GM12878 (cell line): ENCODE measurements at regions of chr5 and their contacts with region 1.

Region 1: GRCh38 chr5:149834246-149834855 is 104.2 kb downstream of the PPARGC1B start:
- DNase-seq: no peak
- ATAC-seq: peak; percentile 55
- H3K4me3 ChIP-seq: no peak overlapping the region
- H3K27ac ChIP-seq: no peak overlapping the region
- H3K4me1 ChIP-seq: peaks cover 8% of the 10 kb centered on the region
- H3K27me3 ChIP-seq: no peaks in the 10 kb centered on the region
- CTCF ChIP-seq: peak; percentile 72 to 78 (median 75)
- EP300 ChIP-seq: no peak
- POLR2A ChIP-seq: no peak
- RAD21 ChIP-seq: peak; percentile 68

Region 2: DNA sequence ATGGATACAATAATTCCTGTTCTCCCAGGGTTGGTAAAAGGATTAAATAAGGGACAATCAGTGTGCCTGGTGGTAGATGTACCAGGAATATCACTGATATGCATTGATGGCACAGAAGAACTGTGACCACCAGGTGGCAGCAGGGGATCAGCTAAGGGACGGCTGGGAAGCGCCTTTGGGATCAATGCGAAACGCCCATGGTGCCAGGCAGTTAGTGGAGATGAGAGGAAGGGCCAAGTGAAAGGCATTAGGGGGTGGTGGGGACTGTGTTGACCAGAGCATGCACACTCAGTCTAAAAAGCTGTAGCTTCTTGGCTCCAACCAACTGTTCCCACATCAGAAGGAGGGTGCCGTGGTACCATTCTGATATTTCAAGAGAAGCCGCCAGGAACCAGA is 197.5 kb before region 1 on chr5:
- CTCF ChIA-PET with region 1: interaction called, 165 read pairs
- POLR2A ChIA-PET with region 1: interaction called, 3 read pairs
- RAD21 ChIA-PET with region 1: interaction called, 148 read pairs
- SMC1A ChIA-PET with region 1: interaction called, 38 read pairs
- in situ Hi-C with region 1: loop called (anchors 5 kb)
- intact Hi-C with region 1: no loop called
- DNase-seq: no peak
- ATAC-seq: peak; percentile 85
- H3K4me3 ChIP-seq: no peak overlapping the region
- H3K27ac ChIP-seq: no peak overlapping the region
- H3K4me1 ChIP-seq: peaks cover 12% of the 10 kb centered on the region
- H3K27me3 ChIP-seq: no peaks in the 10 kb centered on the region
- CTCF ChIP-seq: peak; percentile 74 to 78 (median 77)
- EP300 ChIP-seq: no peak
- POLR2A ChIP-seq: no peak
- RAD21 ChIP-seq: peak; percentile 87

Region 3: DNA sequence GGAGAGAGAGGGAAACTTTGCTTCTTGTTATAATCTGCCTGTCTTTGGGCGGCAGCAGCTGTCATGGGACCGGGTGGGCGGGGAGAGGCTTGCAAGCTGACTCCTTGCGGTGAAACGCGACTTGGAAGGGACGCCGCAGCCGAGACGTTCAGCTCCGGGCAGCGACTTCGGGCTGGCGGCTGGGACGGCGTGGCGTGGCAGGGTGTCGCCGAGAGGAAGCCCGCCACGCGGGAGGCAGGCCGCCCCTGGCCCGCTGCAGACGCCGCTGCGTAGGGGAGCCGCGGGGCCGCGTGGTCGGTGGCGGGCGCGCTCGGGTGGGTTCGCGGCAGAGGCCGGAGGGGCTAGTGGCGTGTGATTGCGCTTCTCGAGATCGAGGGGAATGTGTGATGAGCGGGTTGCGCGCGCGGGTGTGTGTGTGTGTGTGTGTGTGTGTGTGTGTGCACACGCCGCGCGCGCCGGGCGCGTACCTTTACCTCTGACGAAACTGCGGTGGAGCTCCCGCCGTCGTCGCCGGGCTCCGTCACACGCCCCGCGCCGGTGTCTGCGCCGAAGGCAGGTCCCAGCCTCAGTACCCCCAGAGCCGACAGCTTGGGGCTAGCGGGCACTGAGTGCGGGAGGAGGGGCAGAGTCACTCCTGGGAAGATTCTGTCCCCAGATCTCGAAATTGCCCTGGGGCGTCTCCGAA is 102.6 kb before region 1 on chr5:
- CTCF ChIA-PET with region 1: interaction called, 35 read pairs
- POLR2A ChIA-PET with region 1: interaction called, 5 read pairs
- RAD21 ChIA-PET with region 1: interaction called, 12 read pairs
- SMC1A ChIA-PET with region 1: interaction called, 25 read pairs
- in situ Hi-C with region 1: no loop called
- intact Hi-C with region 1: loop called (anchors 2 kb)
- DNase-seq: peak; percentile 62
- ATAC-seq: peak; percentile 77
- H3K4me3 ChIP-seq: peak overlapping the region; percentile 100
- H3K27ac ChIP-seq: peak overlapping the region; percentile 82
- H3K4me1 ChIP-seq: no peaks in the 10 kb centered on the region; the same call in 1 of the 2 replicates
- H3K27me3 ChIP-seq: no peaks in the 10 kb centered on the region
- CTCF ChIP-seq: no peak
- EP300 ChIP-seq: no peak
- POLR2A ChIP-seq: peak; percentile 77
- RAD21 ChIP-seq: no peak

Region 4: DNA sequence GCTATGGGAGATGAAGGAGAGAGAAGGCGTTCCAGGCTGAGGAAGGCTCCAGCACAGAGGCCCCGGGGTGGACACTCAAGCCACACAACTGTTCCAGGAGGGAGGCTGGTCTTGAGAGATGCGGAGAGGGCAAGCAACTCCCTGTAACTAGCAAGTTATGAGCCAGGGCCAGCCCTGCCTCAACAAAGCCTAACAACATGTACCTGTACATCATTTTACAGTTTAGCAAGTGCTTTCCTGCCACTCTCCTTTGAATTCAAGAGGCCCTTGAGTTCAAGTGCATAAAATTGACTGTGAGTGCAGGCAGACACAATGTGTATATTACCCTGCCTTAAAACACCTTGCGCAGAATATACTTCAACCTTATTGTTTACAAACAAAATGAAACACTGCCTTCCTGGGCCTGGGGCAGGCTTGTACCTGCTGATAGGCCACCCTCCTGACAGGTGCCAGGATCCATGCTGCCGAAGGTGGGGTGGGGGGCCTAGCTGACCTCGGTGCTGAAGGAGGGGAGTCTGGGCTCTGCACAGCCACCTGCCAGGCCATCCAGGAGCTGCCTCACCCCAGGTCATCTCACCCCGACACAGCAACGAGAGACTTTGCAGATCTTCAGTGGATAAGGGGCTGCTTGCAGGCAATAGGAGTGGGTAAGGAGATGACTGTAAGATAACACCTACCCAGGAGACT is 24.3 kb before region 1 on chr5:
- CTCF ChIA-PET with region 1: interaction called, 55 read pairs
- POLR2A ChIA-PET with region 1: interaction called, 70 read pairs
- RAD21 ChIA-PET with region 1: interaction called, 139 read pairs
- SMC1A ChIA-PET with region 1: interaction called, 67 read pairs
- in situ Hi-C with region 1: no loop called
- intact Hi-C with region 1: no loop called
- DNase-seq: no peak
- ATAC-seq: no peak
- H3K4me3 ChIP-seq: no peak overlapping the region
- H3K27ac ChIP-seq: peak overlapping the region; percentile 55
- H3K4me1 ChIP-seq: peaks cover 43% of the 10 kb centered on the region
- H3K27me3 ChIP-seq: no peaks in the 10 kb centered on the region
- CTCF ChIP-seq: no peak
- EP300 ChIP-seq: no peak
- POLR2A ChIP-seq: no peak
- RAD21 ChIP-seq: no peak

Region 5: GRCh38 chr5:149852641-149853330 is 18.4 kb after region 1 on chr5:
- CTCF ChIA-PET with region 1: interaction called, 462 read pairs
- POLR2A ChIA-PET with region 1: interaction called, 7 read pairs
- RAD21 ChIA-PET with region 1: interaction called, 137 read pairs
- SMC1A ChIA-PET with region 1: interaction called, 81 read pairs
- in situ Hi-C with region 1: no loop called
- intact Hi-C with region 1: no loop called
- DNase-seq: no peak
- ATAC-seq: peak; percentile 96
- H3K4me3 ChIP-seq: no peak overlapping the region
- H3K27ac ChIP-seq: no peak overlapping the region
- H3K4me1 ChIP-seq: no peaks in the 10 kb centered on the region
- H3K27me3 ChIP-seq: no peaks in the 10 kb centered on the region
- CTCF ChIP-seq: peak; percentile 83 to 93 (median 87)
- EP300 ChIP-seq: no peak
- POLR2A ChIP-seq: no peak
- RAD21 ChIP-seq: peak; percentile 83

Region 6: GRCh38 chr5:149938791-149939358 is 104.5 kb after region 1 on chr5:
- CTCF ChIA-PET with region 1: no interaction called
- POLR2A ChIA-PET with region 1: no interaction called
- RAD21 ChIA-PET with region 1: no interaction called
- SMC1A ChIA-PET with region 1: no interaction called
- in situ Hi-C with region 1: no loop called
- intact Hi-C with region 1: no loop called
- DNase-seq: no peak
- ATAC-seq: no peak
- H3K4me3 ChIP-seq: no peak overlapping the region
- H3K27ac ChIP-seq: no peak overlapping the region
- H3K4me1 ChIP-seq: no peaks in the 10 kb centered on the region
- H3K27me3 ChIP-seq: no peaks in the 10 kb centered on the region; a peak in 1 of 4 replicates
- CTCF ChIP-seq: no peak
- EP300 ChIP-seq: no peak
- POLR2A ChIP-seq: no peak
- RAD21 ChIP-seq: no peak

Region 7: DNA sequence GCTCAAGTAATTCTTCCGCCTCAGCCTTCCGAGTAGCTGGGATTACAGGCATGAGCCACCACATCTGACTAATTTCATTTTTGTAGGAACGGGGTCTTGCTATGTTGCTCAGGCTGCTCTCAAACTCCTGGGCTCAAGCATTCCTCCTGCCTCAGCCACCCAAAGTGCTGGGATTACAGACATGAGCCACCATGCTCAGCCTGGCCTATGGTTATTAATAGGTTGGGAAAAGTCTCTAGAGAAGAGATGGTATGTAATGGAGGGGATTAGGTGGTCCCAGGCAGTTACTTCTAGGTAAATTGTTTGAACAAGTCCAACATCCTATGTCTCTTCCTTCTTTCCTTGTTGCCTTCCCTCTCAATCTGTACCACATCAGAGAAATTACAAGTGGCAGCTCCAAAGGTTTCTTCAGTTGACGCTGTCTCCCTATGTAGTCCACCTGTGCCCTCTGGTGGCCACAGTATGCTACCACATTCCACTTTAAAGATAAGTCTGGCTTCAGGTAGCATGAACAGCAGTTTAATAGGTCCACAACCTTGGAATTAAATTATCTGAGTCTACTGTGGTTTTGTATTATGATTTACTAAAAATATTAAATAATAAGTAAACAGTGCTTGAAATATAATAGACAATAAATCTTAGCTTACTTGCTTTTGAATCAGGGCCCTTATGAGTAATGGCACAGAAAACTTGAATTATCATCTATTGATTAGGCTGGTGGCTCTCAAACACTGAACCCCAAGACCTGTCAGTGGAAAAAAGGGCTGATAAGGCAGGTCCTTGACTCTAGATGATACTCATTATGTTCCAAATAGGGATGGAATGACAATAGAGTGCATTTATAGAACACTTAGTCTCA is 156.4 kb after region 1 on chr5:
- CTCF ChIA-PET with region 1: interaction called, 110 read pairs
- POLR2A ChIA-PET with region 1: no interaction called
- RAD21 ChIA-PET with region 1: interaction called, 24 read pairs
- SMC1A ChIA-PET with region 1: interaction called, 45 read pairs
- in situ Hi-C with region 1: loop called (anchors 5 kb)
- intact Hi-C with region 1: loop called (anchors 1 kb)
- DNase-seq: peak; percentile 26
- ATAC-seq: peak; percentile 95
- H3K4me3 ChIP-seq: no peak overlapping the region
- H3K27ac ChIP-seq: no peak overlapping the region
- H3K4me1 ChIP-seq: no peaks in the 10 kb centered on the region
- H3K27me3 ChIP-seq: no peaks in the 10 kb centered on the region
- CTCF ChIP-seq: peak; percentile 86 to 96 (median 92); a peak in 5 of 6 replicates
- EP300 ChIP-seq: no peak
- POLR2A ChIP-seq: no peak
- RAD21 ChIP-seq: peak; percentile 99